ENCODE measurements at regions of chr15 and their contacts with region 1.

Region 1: GRCh38 chr15:32994810-32995424 is 199.6 kb downstream of the FMN1 start:
- DNase-seq: no peak
- H3K4me3 Mint-ChIP-seq: no peak overlapping the region
- H3K27ac Mint-ChIP-seq: no peak overlapping the region
- H3K4me1 Mint-ChIP-seq: no peaks in the 10 kb centered on the region
- H3K27me3 Mint-ChIP-seq: peaks cover 3% of the 10 kb centered on the region

Region 2: GRCh38 chr15:32657198-32657883 is 337.6 kb before region 1 on chr15:
- intact Hi-C with region 1: loop called (anchors 1 kb)
- DNase-seq: peak; percentile 11
- H3K4me3 Mint-ChIP-seq: peak overlapping the region; percentile 16
- H3K27ac Mint-ChIP-seq: peak overlapping the region; percentile 15
- H3K4me1 Mint-ChIP-seq: peaks cover 19% of the 10 kb centered on the region
- H3K27me3 Mint-ChIP-seq: no peaks in the 10 kb centered on the region

Region 3: GRCh38 chr15:32844118-32844711 is 150.7 kb before region 1 on chr15:
- intact Hi-C with region 1: loop called (anchors 10 kb)
- DNase-seq: no peak
- H3K4me3 Mint-ChIP-seq: no peak overlapping the region
- H3K27ac Mint-ChIP-seq: no peak overlapping the region
- H3K4me1 Mint-ChIP-seq: no peaks in the 10 kb centered on the region
- H3K27me3 Mint-ChIP-seq: peaks cover 2% of the 10 kb centered on the region

Region 4: DNA sequence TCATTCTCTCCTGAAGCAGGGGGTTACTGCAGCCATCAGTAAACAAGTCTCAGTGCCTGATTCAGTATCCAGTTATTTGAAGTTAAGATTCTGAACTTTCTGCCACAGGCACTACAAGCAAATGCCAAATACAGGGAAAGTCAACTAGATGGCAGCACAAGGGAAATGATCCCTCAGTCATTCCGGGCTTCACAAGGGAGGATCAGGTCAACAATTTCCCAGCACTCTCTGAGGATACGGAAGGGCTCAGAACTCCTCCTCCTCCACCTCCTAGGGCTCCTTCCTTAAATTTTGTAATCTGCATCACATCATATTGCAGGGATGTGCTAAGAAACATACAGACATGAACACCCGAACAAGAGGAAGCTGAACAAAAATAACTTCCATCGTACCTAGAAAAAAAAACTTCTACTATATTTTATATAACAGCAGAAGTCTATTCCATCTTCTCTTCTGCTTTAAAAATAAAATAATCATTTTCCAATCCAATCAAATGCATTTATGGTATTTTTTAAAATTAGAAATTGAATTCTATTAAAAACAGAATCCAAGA is 12.5 kb after region 1 on chr15:
- intact Hi-C with region 1: no loop called
- DNase-seq: no peak
- H3K4me3 Mint-ChIP-seq: no peak overlapping the region
- H3K27ac Mint-ChIP-seq: no peak overlapping the region
- H3K4me1 Mint-ChIP-seq: no peaks in the 10 kb centered on the region
- H3K27me3 Mint-ChIP-seq: peaks cover 9% of the 10 kb centered on the region

Measured in activated T-helper 1 cell treated with anti-CD3 and anti-CD28 coated beads, Interleukin-12 subunit alpha, Interleukin-12 subunit beta, Interleukin-2, Interleukin-4 antibody, amounts not matched to agents 30 ng/mL and 10 ng/mL and 1 ng/mL, durations not matched to agents 14 hours and 24 hours and 36 hours (primary cell).